Esophagus muscularis mucosa (tissue), 4 donors: ENCODE measurements at regions of chr4 and their contacts with region 1.

Region 1: GRCh38 chr4:128574706-128575105 is 234.8 kb upstream of the JADE1 start:
- DNase-seq: no peak
- H3K4me3 ChIP-seq: no peak overlapping the region
- H3K27ac ChIP-seq: no peak overlapping the region
- H3K4me1 ChIP-seq: peaks cover 33 to 43% (median 39%) of the 10 kb centered on the region in 4 donors
- H3K27me3 ChIP-seq: no peaks in the 10 kb centered on the region
- CTCF ChIP-seq: peak; percentile 34 to 59 (median 42)
- EP300 ChIP-seq: no peak
- POLR2A ChIP-seq: no peak

Region 2: GRCh38 chr4:128648021-128648420 is 73.3 kb after region 1 on chr4:
- intact Hi-C with region 1: no loop called
- DNase-seq: no peak
- H3K4me3 ChIP-seq: no peak overlapping the region
- H3K27ac ChIP-seq: no peak overlapping the region
- H3K4me1 ChIP-seq: peaks cover 2 to 14% (median 6%) of the 10 kb centered on the region in 4 donors
- H3K27me3 ChIP-seq: no peaks in the 10 kb centered on the region
- CTCF ChIP-seq: no peak
- EP300 ChIP-seq: no peak
- POLR2A ChIP-seq: no peak

Region 3: GRCh38 chr4:128658214-128658631 is 83.5 kb after region 1 on chr4:
- intact Hi-C with region 1: loop called (anchors 5 kb)
- DNase-seq: no peak
- H3K4me3 ChIP-seq: no peak overlapping the region
- H3K27ac ChIP-seq: peak overlapping the region; percentile 81 to 86 (median 82)
- H3K4me1 ChIP-seq: peaks cover 35 to 88% (median 63%) of the 10 kb centered on the region in 4 donors
- H3K27me3 ChIP-seq: no peaks in the 10 kb centered on the region
- CTCF ChIP-seq: no peak
- EP300 ChIP-seq: no peak
- POLR2A ChIP-seq: no peak